Activated CD4-positive, alpha-beta T cell treated with anti-CD3 and anti-CD28 coated beads for 36 hours (primary cell): ENCODE measurements at regions of chr14 and their contacts with region 1.

Region 1: GRCh38 chr14:106417224-106418049 is 891.1 kb downstream of the TMEM121 start:
- DNase-seq: peak; percentile 99
- ATAC-seq: peak; percentile 91
- H3K4me3 Mint-ChIP-seq: no peak overlapping the region
- H3K27ac Mint-ChIP-seq: no peak overlapping the region
- H3K4me1 Mint-ChIP-seq: peaks cover 11% of the 10 kb centered on the region
- H3K27me3 Mint-ChIP-seq: peaks cover 6% of the 10 kb centered on the region

Region 2: DNA sequence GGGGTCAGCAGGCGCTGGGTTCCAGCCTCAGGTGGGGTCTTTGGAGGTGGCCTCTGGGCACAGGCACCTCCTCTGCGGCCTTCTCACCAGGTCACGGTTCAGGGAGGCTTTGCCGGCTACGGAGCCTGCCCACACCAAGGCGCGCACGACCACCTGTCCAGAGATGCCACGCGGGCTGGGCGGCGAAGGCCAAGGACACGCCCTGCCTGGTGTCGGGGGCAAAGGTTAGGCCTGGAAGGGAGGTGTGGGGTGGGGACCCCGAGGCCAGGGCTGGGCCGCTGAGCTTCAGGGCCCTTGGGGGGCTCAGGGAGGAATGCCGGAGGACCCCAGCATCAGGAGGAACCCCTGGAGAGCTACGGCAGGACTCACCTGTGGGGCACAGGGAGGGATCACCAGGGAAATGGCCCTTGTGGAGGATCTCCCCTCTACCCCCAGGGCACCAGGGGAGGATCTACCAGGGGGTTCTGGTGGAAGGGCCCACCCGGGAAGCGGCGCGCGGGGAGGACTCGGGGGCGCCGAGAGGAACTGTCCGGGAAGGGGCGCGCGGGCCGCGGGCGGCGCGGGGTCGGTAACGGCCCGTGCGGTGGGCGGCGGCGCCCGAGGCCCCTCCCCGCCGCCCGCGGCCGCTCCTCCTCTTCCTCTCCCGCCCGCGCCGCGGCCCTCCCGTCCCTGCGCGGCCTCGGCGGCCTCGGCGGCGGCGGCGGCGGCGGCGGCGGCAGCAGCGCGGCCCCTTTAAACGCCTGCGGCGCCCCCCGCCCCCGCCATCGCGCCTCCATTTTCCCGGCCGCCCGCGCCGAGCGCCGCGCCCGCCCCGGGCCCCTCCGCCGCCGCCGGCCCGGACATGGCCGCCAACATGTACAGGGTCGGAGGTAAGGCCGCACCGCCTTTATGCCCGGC is 998.0 kb before region 1 on chr14 and contains the start of gene MTA1:
- CTCF ChIA-PET with region 1: no interaction called
- POLR2A ChIA-PET with region 1: no interaction called
- intact Hi-C with region 1: no loop called
- DNase-seq: peak; percentile 72
- ATAC-seq: peak; percentile 67
- H3K4me3 Mint-ChIP-seq: peak within 1 kb of the TSS; percentile 81
- H3K27ac Mint-ChIP-seq: peak within 1 kb of the TSS; percentile 13
- H3K4me1 Mint-ChIP-seq: peaks cover 23% of the 10 kb centered on the region
- H3K27me3 Mint-ChIP-seq: no peaks in the 10 kb centered on the region
- total RNA-seq, gene MTA1: 136 to 152 TPM

Region 3: DNA sequence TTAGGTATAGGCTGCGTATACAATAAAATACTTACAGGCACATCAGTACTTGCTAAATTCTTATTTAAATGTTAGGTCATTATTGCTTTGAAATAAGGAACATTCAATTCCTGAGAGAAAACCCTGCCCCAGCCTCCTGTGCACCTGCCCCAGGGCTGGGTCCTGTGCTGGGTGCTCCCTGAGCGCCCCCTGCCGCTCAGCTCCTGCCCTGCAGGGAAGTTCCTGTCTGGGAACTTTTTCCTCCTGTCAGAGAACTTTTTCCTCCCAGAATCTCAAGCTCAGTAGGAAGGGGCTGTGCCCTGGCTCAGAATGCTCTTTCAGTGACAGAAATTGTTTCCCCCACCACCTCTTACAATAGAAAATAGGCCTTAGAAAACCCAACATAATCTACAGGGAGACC is 139.9 kb before region 1 on chr14:
- CTCF ChIA-PET with region 1: interaction called, 30 read pairs
- POLR2A ChIA-PET with region 1: no interaction called
- intact Hi-C with region 1: no loop called
- DNase-seq: peak; percentile 66
- ATAC-seq: peak; percentile 51
- H3K4me3 Mint-ChIP-seq: peak overlapping the region; percentile 56
- H3K27ac Mint-ChIP-seq: no peak overlapping the region
- H3K4me1 Mint-ChIP-seq: peaks cover 34% of the 10 kb centered on the region
- H3K27me3 Mint-ChIP-seq: peaks cover 2% of the 10 kb centered on the region

Region 4: GRCh38 chr14:106318700-106319099 is 98.7 kb before region 1 on chr14:
- CTCF ChIA-PET with region 1: interaction called, 17 read pairs
- POLR2A ChIA-PET with region 1: no interaction called
- intact Hi-C with region 1: no loop called
- DNase-seq: peak; percentile 83
- ATAC-seq: peak; percentile 80
- H3K4me3 Mint-ChIP-seq: no peak overlapping the region
- H3K27ac Mint-ChIP-seq: no peak overlapping the region
- H3K4me1 Mint-ChIP-seq: no peaks in the 10 kb centered on the region
- H3K27me3 Mint-ChIP-seq: no peaks in the 10 kb centered on the region

Region 5: GRCh38 chr14:106390401-106390800 is 27.0 kb before region 1 on chr14:
- CTCF ChIA-PET with region 1: interaction called, 132 read pairs
- POLR2A ChIA-PET with region 1: interaction called, 3 read pairs
- intact Hi-C with region 1: no loop called
- DNase-seq: no peak
- ATAC-seq: no peak
- H3K4me3 Mint-ChIP-seq: no peak overlapping the region
- H3K27ac Mint-ChIP-seq: no peak overlapping the region
- H3K4me1 Mint-ChIP-seq: peaks cover 26% of the 10 kb centered on the region
- H3K27me3 Mint-ChIP-seq: peaks cover 10% of the 10 kb centered on the region

Region 6: DNA sequence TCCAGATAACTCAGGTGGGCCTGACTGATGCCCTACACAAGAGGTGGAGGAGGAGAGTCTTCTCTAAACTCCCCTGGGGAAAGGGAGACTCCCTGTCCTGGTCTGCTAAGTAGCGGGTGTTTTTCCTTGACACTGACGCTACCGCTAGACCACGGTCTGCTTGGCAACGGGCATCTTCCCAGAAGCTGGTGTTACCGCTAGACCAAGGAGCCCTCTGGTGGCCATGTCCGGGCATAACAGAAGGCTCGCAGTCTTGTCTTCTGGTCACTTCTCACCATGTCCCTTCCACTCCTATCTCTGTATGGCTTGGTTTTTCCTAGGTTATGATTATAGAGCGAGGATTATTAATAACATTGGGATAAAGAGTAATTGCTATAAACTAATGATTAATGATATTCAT is 74.4 kb after region 1 on chr14:
- CTCF ChIA-PET with region 1: interaction called, 13 read pairs
- POLR2A ChIA-PET with region 1: no interaction called
- intact Hi-C with region 1: no loop called
- DNase-seq: peak; percentile 63
- ATAC-seq: no peak
- H3K4me3 Mint-ChIP-seq: no peak overlapping the region
- H3K27ac Mint-ChIP-seq: no peak overlapping the region
- H3K4me1 Mint-ChIP-seq: peaks cover 32% of the 10 kb centered on the region
- H3K27me3 Mint-ChIP-seq: no peaks in the 10 kb centered on the region

Region 7: DNA sequence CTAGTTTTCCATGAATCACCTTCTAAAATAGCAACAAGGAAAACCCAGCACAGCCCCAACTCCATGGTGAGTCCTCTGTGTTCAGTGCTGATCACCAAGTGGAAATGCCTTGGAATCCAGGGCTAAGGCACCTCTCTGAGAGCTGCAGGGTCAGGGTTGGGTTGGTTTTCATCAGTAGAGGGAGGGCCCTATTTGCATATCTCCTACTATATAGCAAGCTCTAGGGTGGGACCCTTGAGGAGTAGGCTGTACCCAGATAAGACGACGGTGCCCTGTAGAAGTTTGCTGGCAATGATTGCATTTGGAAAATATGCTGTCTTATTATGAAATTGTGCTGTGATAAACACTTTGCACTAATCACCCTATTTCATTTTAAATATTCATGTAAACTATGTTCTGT is 120.8 kb after region 1 on chr14:
- CTCF ChIA-PET with region 1: interaction called, 13 read pairs
- POLR2A ChIA-PET with region 1: no interaction called
- intact Hi-C with region 1: no loop called
- DNase-seq: no peak
- ATAC-seq: no peak
- H3K4me3 Mint-ChIP-seq: no peak overlapping the region
- H3K27ac Mint-ChIP-seq: no peak overlapping the region
- H3K4me1 Mint-ChIP-seq: peaks cover 6% of the 10 kb centered on the region
- H3K27me3 Mint-ChIP-seq: peaks cover 17% of the 10 kb centered on the region